CD4-positive, alpha-beta T cell (primary cell): ENCODE measurements at regions of chr17 and their contacts with region 1.

Region 1: GRCh38 chr17:30104575-30105339 is 11.9 kb upstream of the NSRP1 start:
- DNase-seq: peak; percentile 50 to 88 (median 60)
- ATAC-seq: peak; percentile 94
- H3K4me3 ChIP-seq: peak overlapping the region; percentile 47
- H3K4me3 Mint-ChIP-seq: peak overlapping the region; percentile 75
- H3K27ac ChIP-seq: no peak overlapping the region
- H3K27ac Mint-ChIP-seq: no peak overlapping the region
- H3K4me1 ChIP-seq: peaks cover 11% of the 10 kb centered on the region
- H3K4me1 Mint-ChIP-seq: peaks cover 4% of the 10 kb centered on the region
- H3K27me3 ChIP-seq: no peaks in the 10 kb centered on the region
- H3K27me3 Mint-ChIP-seq: peaks cover 7% of the 10 kb centered on the region
- CTCF ChIP-seq: peak; percentile 98

Region 2: GRCh38 chr17:30093463-30094147 is 11.2 kb before region 1 on chr17:
- CTCF ChIA-PET with region 1: interaction called, 21 read pairs
- POLR2A ChIA-PET with region 1: no interaction called
- intact Hi-C with region 1: no loop called
- DNase-seq: peak in 11 of 14 experiments; percentile 5 to 74 (median 24)
- ATAC-seq: peak; percentile 51
- H3K4me3 ChIP-seq: no peak overlapping the region
- H3K4me3 Mint-ChIP-seq: no peak overlapping the region
- H3K27ac ChIP-seq: no peak overlapping the region
- H3K27ac Mint-ChIP-seq: no peak overlapping the region
- H3K4me1 ChIP-seq: peaks cover 6% of the 10 kb centered on the region
- H3K4me1 Mint-ChIP-seq: peaks cover 6% of the 10 kb centered on the region
- H3K27me3 ChIP-seq: peaks cover 3 to 4% of the 10 kb centered on the region in 2 experiments
- H3K27me3 Mint-ChIP-seq: peaks cover 26% of the 10 kb centered on the region
- CTCF ChIP-seq: peak; percentile 85

Region 3: GRCh38 chr17:30116661-30117551 is 12.1 kb after region 1 on chr17 and contains the start of gene NSRP1:
- CTCF ChIA-PET with region 1: interaction called, 18 read pairs
- POLR2A ChIA-PET with region 1: interaction called, 5 read pairs
- intact Hi-C with region 1: no loop called
- DNase-seq: peak; percentile 85 to 96 (median 90)
- ATAC-seq: peak; percentile 97
- H3K4me3 ChIP-seq: peak within 1 kb of the TSS; percentile 97
- H3K4me3 Mint-ChIP-seq: peak within 1 kb of the TSS; percentile 97
- H3K27ac ChIP-seq: peak within 1 kb of the TSS; percentile 85 to 99
- H3K27ac Mint-ChIP-seq: peak within 1 kb of the TSS; percentile 95
- H3K4me1 ChIP-seq: peaks cover 21% of the 10 kb centered on the region
- H3K4me1 Mint-ChIP-seq: peaks cover 45% of the 10 kb centered on the region
- H3K27me3 ChIP-seq: no peaks in the 10 kb centered on the region
- H3K27me3 Mint-ChIP-seq: no peaks in the 10 kb centered on the region
- CTCF ChIP-seq: no peak
- total RNA-seq, gene NSRP1: 23.8 to 25.2 TPM

Region 4: GRCh38 chr17:30124273-30124796 is 19.6 kb after region 1 on chr17:
- CTCF ChIA-PET with region 1: interaction called, 15 read pairs
- POLR2A ChIA-PET with region 1: interaction called, 5 read pairs
- intact Hi-C with region 1: no loop called
- DNase-seq: no peak
- ATAC-seq: no peak
- H3K4me3 ChIP-seq: no peak overlapping the region
- H3K4me3 Mint-ChIP-seq: no peak overlapping the region
- H3K27ac ChIP-seq: no peak overlapping the region
- H3K27ac Mint-ChIP-seq: peak overlapping the region; percentile 27
- H3K4me1 ChIP-seq: peaks cover 10% of the 10 kb centered on the region
- H3K4me1 Mint-ChIP-seq: peaks cover 42% of the 10 kb centered on the region
- H3K27me3 ChIP-seq: no peaks in the 10 kb centered on the region
- H3K27me3 Mint-ChIP-seq: no peaks in the 10 kb centered on the region
- CTCF ChIP-seq: no peak

Region 5: DNA sequence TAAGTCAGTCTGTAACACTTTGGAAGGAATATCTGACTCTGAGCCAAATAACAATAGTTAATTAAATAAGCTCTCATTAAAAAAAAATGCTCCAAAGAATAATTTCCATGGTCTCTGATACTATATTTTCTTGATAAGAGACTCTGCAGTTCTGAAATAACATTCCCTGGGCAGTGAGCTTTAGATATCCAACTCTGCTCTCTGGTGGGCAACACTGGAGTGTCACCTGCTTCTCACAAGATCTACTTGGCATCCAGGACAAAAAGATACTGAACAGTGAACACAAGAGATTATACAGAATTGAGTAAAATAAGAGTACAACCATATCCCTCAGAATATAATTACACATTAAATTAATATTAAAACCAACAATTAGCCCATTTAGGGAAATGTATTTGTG is 173.3 kb after region 1 on chr17:
- CTCF ChIA-PET with region 1: interaction called, 4 read pairs
- POLR2A ChIA-PET with region 1: interaction called, 3 read pairs
- intact Hi-C with region 1: loop called (anchors 2 to 5 kb)
- DNase-seq: peak in 3 of 14 experiments; percentile 12 to 43 (median 28)
- ATAC-seq: peak; percentile 52
- H3K4me3 ChIP-seq: no peak overlapping the region
- H3K4me3 Mint-ChIP-seq: no peak overlapping the region
- H3K27ac ChIP-seq: no peak overlapping the region
- H3K27ac Mint-ChIP-seq: no peak overlapping the region
- H3K4me1 ChIP-seq: no peaks in the 10 kb centered on the region
- H3K4me1 Mint-ChIP-seq: no peaks in the 10 kb centered on the region
- H3K27me3 ChIP-seq: no peaks in the 10 kb centered on the region
- H3K27me3 Mint-ChIP-seq: no peaks in the 10 kb centered on the region
- CTCF ChIP-seq: peak; percentile 19

Region 6: DNA sequence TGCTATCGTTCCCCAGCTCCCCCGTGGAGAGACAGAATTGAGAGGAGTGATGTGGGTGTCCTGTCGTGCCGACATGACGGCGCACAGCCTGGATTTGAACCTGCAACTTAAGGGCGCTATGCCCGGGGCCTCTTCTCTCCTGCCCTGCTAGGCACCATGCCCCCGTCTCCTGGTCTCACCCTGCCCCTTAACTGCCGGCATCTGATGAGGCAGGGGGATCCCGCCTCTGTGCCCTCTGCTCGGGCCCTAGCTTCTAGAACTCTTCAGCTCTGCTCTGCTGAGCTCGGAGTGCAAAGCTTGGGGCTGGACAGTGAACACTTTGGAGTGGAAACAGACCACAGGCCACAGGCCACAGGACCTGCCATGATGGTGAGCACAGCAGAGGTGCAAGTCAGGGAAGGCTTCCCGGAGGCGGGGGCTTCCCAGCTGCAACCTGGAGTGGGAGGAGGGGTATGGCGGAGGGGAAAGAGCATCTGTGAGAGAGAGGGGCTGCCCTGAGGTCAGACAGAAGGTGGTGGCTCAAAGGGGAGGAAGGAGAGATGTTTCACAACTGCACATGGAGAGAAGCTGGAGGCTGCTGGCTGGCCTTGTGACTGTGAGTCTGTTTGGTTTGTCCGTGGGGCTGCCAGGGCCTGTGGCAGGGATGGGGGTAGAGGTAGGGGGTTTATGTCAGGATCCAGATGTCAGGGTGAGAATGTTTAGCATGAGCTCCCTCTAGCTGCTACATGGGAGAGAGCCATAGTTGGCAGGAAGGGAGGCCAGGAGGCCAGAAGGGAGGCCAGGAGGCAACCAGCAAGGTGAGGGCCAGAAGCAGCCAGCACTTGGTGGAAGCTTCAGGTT is 611.9 kb after region 1 on chr17:
- CTCF ChIA-PET with region 1: no interaction called
- POLR2A ChIA-PET with region 1: no interaction called
- intact Hi-C with region 1: loop called in 1 of 2 experiments (anchors 10 kb)
- DNase-seq: peak in 1 of 14 experiments; percentile 2
- ATAC-seq: no peak
- H3K4me3 ChIP-seq: no peak overlapping the region
- H3K4me3 Mint-ChIP-seq: no peak overlapping the region
- H3K27ac ChIP-seq: no peak overlapping the region
- H3K27ac Mint-ChIP-seq: no peak overlapping the region
- H3K4me1 ChIP-seq: peaks cover 11% of the 10 kb centered on the region
- H3K4me1 Mint-ChIP-seq: peaks cover 12% of the 10 kb centered on the region
- H3K27me3 ChIP-seq: no peaks in the 10 kb centered on the region
- H3K27me3 Mint-ChIP-seq: no peaks in the 10 kb centered on the region
- CTCF ChIP-seq: no peak